Left ventricle myocardium superior (tissue), 1 donor: ENCODE measurements at regions of chr5 and their contacts with region 1.

Region 1: GRCh38 chr5:95646554-95647431 is at the start of gene RFESD:
- DNase-seq: peak; percentile 100
- ATAC-seq: peak; percentile 99
- total RNA-seq, gene RFESD: 6.0 TPM

Region 2: GRCh38 chr5:95087816-95088317 is 558.9 kb before region 1 on chr5:
- intact Hi-C with region 1: no loop called
- DNase-seq: no peak
- ATAC-seq: peak; percentile 63

Region 3: GRCh38 chr5:95730730-95731570 is 84.2 kb after region 1 on chr5 and contains the start of gene RHOBTB3:
- intact Hi-C with region 1: loop called (anchors 5 kb)
- DNase-seq: peak; percentile 93
- ATAC-seq: peak; percentile 80
- total RNA-seq, gene RHOBTB3: 90.0 TPM

Region 4: GRCh38 chr5:95760273-95761191 is 113.7 kb after region 1 on chr5:
- intact Hi-C with region 1: loop called (anchors 10 kb)
- DNase-seq: no peak
- ATAC-seq: peak; percentile 44

Region 5: GRCh38 chr5:96336351-96336985 is 689.7 kb after region 1 on chr5:
- intact Hi-C with region 1: loop called (anchors 10 kb)
- DNase-seq: no peak
- ATAC-seq: peak; percentile 74